Right ventricle myocardium inferior (tissue), 1 donor: ENCODE measurements at regions of chr17 and their contacts with region 1.

Region 1: GRCh38 chr17:15502369-15503112 is 35.1 kb upstream of the CDRT4 start:
- DNase-seq: peak; percentile 96
- ATAC-seq: peak; percentile 95

Region 2: GRCh38 chr17:15341385-15341849 is 161.1 kb before region 1 on chr17 and contains the start of gene TEKT3:
- intact Hi-C with region 1: loop called (anchors 5 kb)
- DNase-seq: peak; percentile 94
- ATAC-seq: peak; percentile 100
- total RNA-seq, gene TEKT3: 0.51 TPM

Region 3: GRCh38 chr17:15436473-15437302 is 65.9 kb before region 1 on chr17:
- intact Hi-C with region 1: loop called (anchors 5 kb)
- DNase-seq: peak; percentile 78
- ATAC-seq: peak; percentile 66

Region 4: GRCh38 chr17:15456972-15457722 is 45.4 kb before region 1 on chr17:
- intact Hi-C with region 1: loop called (anchors 5 kb)
- DNase-seq: no peak
- ATAC-seq: peak; percentile 71